ENCODE measurements at regions of chr6 and their contacts with region 1.

Region 1: GRCh38 chr6:118565311-118565960 is 17.3 kb downstream of the PLN start:
- DNase-seq: peak in 3 of 9 experiments; percentile 13 to 78 (median 66)
- ATAC-seq: peak; percentile 97
- H3K4me3 ChIP-seq: no peak overlapping the region
- H3K4me3 Mint-ChIP-seq: no peak overlapping the region
- H3K27ac ChIP-seq: no peak overlapping the region
- H3K27ac Mint-ChIP-seq: peak overlapping the region; percentile 85
- H3K4me1 ChIP-seq: peaks cover 3% of the 10 kb centered on the region
- H3K4me1 Mint-ChIP-seq: peaks cover 48% of the 10 kb centered on the region
- H3K27me3 ChIP-seq: no peaks in the 10 kb centered on the region
- H3K27me3 Mint-ChIP-seq: no peaks in the 10 kb centered on the region
- CTCF ChIP-seq: peak; percentile 72

Region 2: GRCh38 chr6:116894669-116895068 is 1670.8 kb before region 1 on chr6:
- CTCF ChIA-PET with region 1: no interaction called
- POLR2A ChIA-PET with region 1: no interaction called
- intact Hi-C with region 1: no loop called
- DNase-seq: no peak
- ATAC-seq: no peak
- H3K4me3 ChIP-seq: no peak overlapping the region
- H3K4me3 Mint-ChIP-seq: no peak overlapping the region
- H3K27ac ChIP-seq: no peak overlapping the region
- H3K27ac Mint-ChIP-seq: no peak overlapping the region
- H3K4me1 ChIP-seq: no peaks in the 10 kb centered on the region
- H3K4me1 Mint-ChIP-seq: no peaks in the 10 kb centered on the region
- H3K27me3 ChIP-seq: no peaks in the 10 kb centered on the region
- H3K27me3 Mint-ChIP-seq: no peaks in the 10 kb centered on the region
- CTCF ChIP-seq: no peak

Region 3: DNA sequence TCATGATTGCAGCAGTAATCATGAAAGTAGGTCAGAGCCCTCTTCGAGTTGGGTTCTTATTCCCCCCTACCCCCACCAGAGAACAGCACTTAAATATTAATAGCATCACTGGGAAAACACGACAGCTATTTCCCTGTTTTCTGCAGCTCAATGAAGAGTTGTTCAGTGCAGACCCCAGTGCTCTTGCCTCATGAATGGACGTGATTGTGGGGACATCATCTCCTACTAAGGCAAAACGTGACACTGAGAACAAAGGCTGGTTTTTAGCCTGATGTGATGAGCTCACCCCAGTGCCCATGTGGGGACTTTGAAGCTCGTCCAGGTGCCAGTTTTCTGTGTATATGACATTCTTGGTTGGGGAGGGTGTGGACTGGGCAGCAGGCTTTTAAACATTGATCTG is 552.5 kb before region 1 on chr6:
- CTCF ChIA-PET with region 1: no interaction called
- POLR2A ChIA-PET with region 1: no interaction called
- intact Hi-C with region 1: no loop called
- DNase-seq: no peak
- ATAC-seq: no peak
- H3K4me3 ChIP-seq: no peak overlapping the region
- H3K4me3 Mint-ChIP-seq: no peak overlapping the region
- H3K27ac ChIP-seq: no peak overlapping the region
- H3K27ac Mint-ChIP-seq: no peak overlapping the region
- H3K4me1 ChIP-seq: no peaks in the 10 kb centered on the region
- H3K4me1 Mint-ChIP-seq: no peaks in the 10 kb centered on the region
- H3K27me3 ChIP-seq: peaks cover 0 to 2% of the 10 kb centered on the region in 2 experiments
- H3K27me3 Mint-ChIP-seq: peaks cover 5% of the 10 kb centered on the region
- CTCF ChIP-seq: no peak

Region 4: GRCh38 chr6:118163542-118163941 is 401.9 kb before region 1 on chr6:
- CTCF ChIA-PET with region 1: no interaction called
- POLR2A ChIA-PET with region 1: no interaction called
- intact Hi-C with region 1: no loop called
- DNase-seq: no peak
- ATAC-seq: no peak
- H3K4me3 ChIP-seq: no peak overlapping the region
- H3K4me3 Mint-ChIP-seq: no peak overlapping the region
- H3K27ac ChIP-seq: no peak overlapping the region
- H3K27ac Mint-ChIP-seq: no peak overlapping the region
- H3K4me1 ChIP-seq: no peaks in the 10 kb centered on the region
- H3K4me1 Mint-ChIP-seq: no peaks in the 10 kb centered on the region
- H3K27me3 ChIP-seq: no peaks in the 10 kb centered on the region
- H3K27me3 Mint-ChIP-seq: peaks cover 7% of the 10 kb centered on the region
- CTCF ChIP-seq: no peak

Region 5: GRCh38 chr6:118495485-118496280 is 69.8 kb before region 1 on chr6:
- CTCF ChIA-PET with region 1: no interaction called
- POLR2A ChIA-PET with region 1: no interaction called
- intact Hi-C with region 1: no loop called
- DNase-seq: no peak
- ATAC-seq: peak; percentile 17
- H3K4me3 ChIP-seq: no peak overlapping the region
- H3K4me3 Mint-ChIP-seq: no peak overlapping the region
- H3K27ac ChIP-seq: no peak overlapping the region
- H3K27ac Mint-ChIP-seq: no peak overlapping the region
- H3K4me1 ChIP-seq: no peaks in the 10 kb centered on the region
- H3K4me1 Mint-ChIP-seq: peaks cover 21% of the 10 kb centered on the region
- H3K27me3 ChIP-seq: no peaks in the 10 kb centered on the region
- H3K27me3 Mint-ChIP-seq: no peaks in the 10 kb centered on the region
- CTCF ChIP-seq: no peak

Region 6: GRCh38 chr6:118580585-118581419 is 15.4 kb after region 1 on chr6:
- CTCF ChIA-PET with region 1: interaction called, 24 read pairs
- POLR2A ChIA-PET with region 1: no interaction called
- intact Hi-C with region 1: no loop called
- DNase-seq: peak in 4 of 9 experiments; percentile 21 to 73 (median 42)
- ATAC-seq: peak; percentile 66
- H3K4me3 ChIP-seq: no peak overlapping the region
- H3K4me3 Mint-ChIP-seq: no peak overlapping the region
- H3K27ac ChIP-seq: no peak overlapping the region
- H3K27ac Mint-ChIP-seq: peak overlapping the region; percentile 86
- H3K4me1 ChIP-seq: no peaks in the 10 kb centered on the region
- H3K4me1 Mint-ChIP-seq: peaks cover 18% of the 10 kb centered on the region
- H3K27me3 ChIP-seq: no peaks in the 10 kb centered on the region
- H3K27me3 Mint-ChIP-seq: no peaks in the 10 kb centered on the region
- CTCF ChIP-seq: peak; percentile 60

Region 7: DNA sequence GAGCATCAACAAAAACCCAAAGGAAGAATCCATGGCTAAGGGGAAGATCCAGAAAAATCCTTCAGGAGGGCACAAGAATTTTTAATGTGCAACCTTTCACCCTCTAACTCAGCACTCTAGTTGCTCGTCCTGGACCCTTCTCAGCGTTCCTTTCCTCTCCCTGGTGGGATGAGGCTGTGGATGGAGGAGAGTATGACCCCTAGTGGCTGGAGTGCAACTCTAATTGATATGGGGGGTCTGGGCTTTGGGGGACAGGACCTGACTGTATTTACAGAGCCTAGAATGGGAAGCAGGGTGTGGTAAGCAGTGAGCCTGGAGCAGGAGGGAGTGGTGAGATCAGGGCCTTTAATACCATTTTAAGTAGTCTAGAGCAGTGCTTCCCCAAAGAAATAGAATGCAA is 169.9 kb after region 1 on chr6:
- CTCF ChIA-PET with region 1: interaction called, 9 read pairs
- POLR2A ChIA-PET with region 1: no interaction called
- intact Hi-C with region 1: loop called in 1 of 2 experiments (anchors 1 kb)
- DNase-seq: peak in 2 of 9 experiments; percentile 41 to 65
- ATAC-seq: peak; percentile 55
- H3K4me3 ChIP-seq: no peak overlapping the region
- H3K4me3 Mint-ChIP-seq: no peak overlapping the region
- H3K27ac ChIP-seq: no peak overlapping the region
- H3K27ac Mint-ChIP-seq: no peak overlapping the region
- H3K4me1 ChIP-seq: peaks cover 14% of the 10 kb centered on the region
- H3K4me1 Mint-ChIP-seq: peaks cover 35% of the 10 kb centered on the region
- H3K27me3 ChIP-seq: no peaks in the 10 kb centered on the region
- H3K27me3 Mint-ChIP-seq: no peaks in the 10 kb centered on the region
- CTCF ChIP-seq: no peak

Region 8: GRCh38 chr6:118776607-118777549 is 211.4 kb after region 1 on chr6:
- CTCF ChIA-PET with region 1: interaction called, 17 read pairs
- POLR2A ChIA-PET with region 1: interaction called, 4 read pairs
- intact Hi-C with region 1: loop called (anchors 1 to 2 kb)
- DNase-seq: peak; percentile 32 to 82 (median 61)
- ATAC-seq: peak; percentile 89
- H3K4me3 ChIP-seq: no peak overlapping the region
- H3K4me3 Mint-ChIP-seq: no peak overlapping the region
- H3K27ac ChIP-seq: no peak overlapping the region
- H3K27ac Mint-ChIP-seq: peak overlapping the region; percentile 38
- H3K4me1 ChIP-seq: peaks cover 20% of the 10 kb centered on the region
- H3K4me1 Mint-ChIP-seq: peaks cover 28% of the 10 kb centered on the region
- H3K27me3 ChIP-seq: no peaks in the 10 kb centered on the region
- H3K27me3 Mint-ChIP-seq: no peaks in the 10 kb centered on the region
- CTCF ChIP-seq: peak; percentile 82

Region 9: DNA sequence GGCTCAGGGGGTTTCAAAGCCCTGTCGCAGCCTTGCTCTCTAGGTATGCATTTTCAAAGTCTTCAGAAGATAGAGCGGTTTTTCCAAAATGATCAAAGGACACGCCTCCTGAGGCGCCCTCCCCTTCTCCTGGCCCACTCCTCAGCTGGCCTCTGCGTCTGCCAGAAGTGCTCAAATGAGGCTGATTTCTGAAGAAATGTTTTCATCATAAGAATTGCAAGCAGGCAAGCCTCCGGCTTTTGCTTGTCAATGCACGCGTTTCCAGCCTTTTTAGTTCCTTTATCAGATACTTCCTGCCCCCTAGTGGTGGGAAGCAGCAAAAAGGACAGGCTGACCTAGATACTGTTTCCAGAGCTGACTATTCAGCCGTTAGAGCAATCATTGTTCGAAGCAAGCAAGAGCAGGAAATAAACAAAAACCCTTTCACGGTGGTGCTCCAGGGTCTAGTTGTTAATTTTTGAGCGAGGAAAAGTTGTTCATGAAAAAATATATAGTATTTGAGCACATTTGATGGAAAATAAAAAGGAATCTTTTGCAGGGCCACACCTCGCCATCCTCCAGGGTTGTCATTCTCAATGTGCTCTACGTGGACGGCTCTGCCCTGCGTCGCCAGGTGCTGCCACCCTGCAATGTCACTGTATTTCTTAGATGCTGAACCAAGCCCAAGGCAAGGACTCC is 235.1 kb after region 1 on chr6:
- CTCF ChIA-PET with region 1: interaction called, 31 read pairs
- POLR2A ChIA-PET with region 1: interaction called, 11 read pairs
- intact Hi-C with region 1: loop called (anchors 1 to 2 kb)
- DNase-seq: peak; percentile 61 to 90 (median 85)
- ATAC-seq: peak; percentile 85
- H3K4me3 ChIP-seq: peak overlapping the region in 1 of 2 experiments; percentile 28
- H3K4me3 Mint-ChIP-seq: peak overlapping the region; percentile 70
- H3K27ac ChIP-seq: peak overlapping the region in 1 of 2 experiments; percentile 38
- H3K27ac Mint-ChIP-seq: peak overlapping the region; percentile 94
- H3K4me1 ChIP-seq: peaks cover 23% of the 10 kb centered on the region
- H3K4me1 Mint-ChIP-seq: peaks cover 42% of the 10 kb centered on the region
- H3K27me3 ChIP-seq: no peaks in the 10 kb centered on the region
- H3K27me3 Mint-ChIP-seq: no peaks in the 10 kb centered on the region
- CTCF ChIP-seq: peak; percentile 91

Region 10: GRCh38 chr6:118934461-118935330 is 369.3 kb after region 1 on chr6 and contains the start of gene MCM9:
- CTCF ChIA-PET with region 1: interaction called, 4 read pairs
- POLR2A ChIA-PET with region 1: interaction called, 4 read pairs
- intact Hi-C with region 1: loop called (anchors 10 kb)
- DNase-seq: peak; percentile 76 to 95 (median 84)
- ATAC-seq: peak; percentile 87
- H3K4me3 ChIP-seq: peak within 1 kb of the TSS; percentile 96 to 97
- H3K4me3 Mint-ChIP-seq: peak within 1 kb of the TSS; percentile 91
- H3K27ac ChIP-seq: peak within 1 kb of the TSS; percentile 87 to 89
- H3K27ac Mint-ChIP-seq: peak within 1 kb of the TSS; percentile 90
- H3K4me1 ChIP-seq: peaks cover 7% of the 10 kb centered on the region
- H3K4me1 Mint-ChIP-seq: peaks cover 43% of the 10 kb centered on the region
- H3K27me3 ChIP-seq: no peaks in the 10 kb centered on the region
- H3K27me3 Mint-ChIP-seq: no peaks in the 10 kb centered on the region
- CTCF ChIP-seq: no peak
- total RNA-seq, gene MCM9: 32.9 to 34.1 TPM

Region 11: DNA sequence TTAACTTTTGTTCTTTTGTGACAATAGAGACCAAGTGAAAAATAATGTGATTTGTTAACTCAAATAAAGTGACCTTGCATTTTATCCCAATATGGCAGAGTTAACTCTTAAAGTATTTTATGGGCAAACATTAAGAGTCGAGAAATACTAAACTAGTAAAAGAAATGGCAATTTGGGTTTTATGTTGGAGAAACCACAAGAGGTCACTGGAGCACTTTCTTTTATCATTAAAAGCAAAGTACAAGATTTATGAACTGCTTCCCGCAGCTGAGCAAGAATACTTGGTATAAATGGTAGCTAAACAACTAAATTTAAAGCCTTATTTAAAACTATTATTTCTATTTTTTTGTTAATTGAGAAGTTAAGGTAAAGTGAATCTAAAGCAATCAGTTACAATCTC is 403.0 kb after region 1 on chr6:
- CTCF ChIA-PET with region 1: interaction called, 10 read pairs
- POLR2A ChIA-PET with region 1: no interaction called
- intact Hi-C with region 1: loop called in 1 of 2 experiments (anchors 10 kb)
- DNase-seq: peak in 2 of 9 experiments; percentile 2 to 17
- ATAC-seq: no peak
- H3K4me3 ChIP-seq: no peak overlapping the region
- H3K4me3 Mint-ChIP-seq: no peak overlapping the region
- H3K27ac ChIP-seq: no peak overlapping the region
- H3K27ac Mint-ChIP-seq: no peak overlapping the region
- H3K4me1 ChIP-seq: no peaks in the 10 kb centered on the region
- H3K4me1 Mint-ChIP-seq: no peaks in the 10 kb centered on the region
- H3K27me3 ChIP-seq: no peaks in the 10 kb centered on the region
- H3K27me3 Mint-ChIP-seq: no peaks in the 10 kb centered on the region
- CTCF ChIP-seq: no peak

Measured in CD8-positive, alpha-beta T cell (primary cell).